Naive thymus-derived CD4-positive, alpha-beta T cell (primary cell): ENCODE measurements at regions of chr18 and their contacts with region 1.

Region 1: DNA sequence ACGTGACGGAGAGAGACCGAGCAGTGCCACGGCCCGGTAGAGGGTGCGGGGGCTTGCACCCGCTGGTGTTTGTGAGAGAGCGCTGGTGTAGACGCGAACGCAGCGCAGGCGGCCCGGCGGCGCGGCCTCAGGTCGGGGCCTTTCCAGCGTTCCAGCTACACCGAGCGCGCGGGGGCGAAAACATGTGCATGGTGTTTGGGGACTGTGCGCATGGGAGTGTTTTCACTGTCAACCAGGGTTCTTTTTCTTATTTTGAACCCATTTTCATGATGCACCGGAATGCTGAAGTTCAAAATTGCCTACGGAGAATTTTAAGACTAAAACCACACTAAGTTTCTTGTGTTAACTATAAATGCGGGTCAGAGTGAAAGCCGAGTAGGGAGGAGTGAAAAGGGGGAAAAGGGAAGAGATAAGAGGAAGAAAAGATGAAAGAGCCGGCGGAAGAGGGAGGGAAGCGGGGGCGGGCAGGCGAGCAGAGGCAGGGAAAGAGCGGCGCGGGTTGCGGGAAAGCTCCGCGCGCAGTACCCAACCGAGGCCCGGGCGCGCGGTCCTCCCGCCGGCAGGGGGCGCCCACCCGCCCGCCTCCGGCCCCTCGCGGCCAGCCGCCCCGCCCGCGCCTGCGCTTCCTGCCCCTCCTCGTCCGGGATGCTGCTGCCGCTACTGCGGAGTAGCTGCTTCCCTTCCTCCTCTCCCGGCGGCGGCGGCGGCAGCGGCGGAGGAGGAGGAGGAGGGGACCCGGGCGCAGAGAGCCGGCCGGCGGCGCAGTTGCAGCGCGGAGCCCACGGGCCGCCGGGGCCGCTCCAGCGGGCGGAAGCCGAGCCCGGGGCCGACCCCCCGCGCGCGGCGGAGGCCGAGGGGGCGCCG is at the start of gene RAB12:
- DNase-seq: peak; percentile 76 to 93 (median 87)
- ATAC-seq: peak; percentile 97
- H3K4me3 ChIP-seq: peak within 1 kb of the TSS; percentile 78
- H3K4me3 Mint-ChIP-seq: peak within 1 kb of the TSS; percentile 88 to 97 (median 94)
- H3K27ac ChIP-seq: peak within 1 kb of the TSS; percentile 76
- H3K27ac Mint-ChIP-seq: peak within 1 kb of the TSS; percentile 91 to 99 (median 96)
- H3K4me1 ChIP-seq: peaks cover 18 to 29% of the 10 kb centered on the region in 2 donors
- H3K4me1 Mint-ChIP-seq: peaks cover 42 to 63% (median 56%) of the 10 kb centered on the region in 7 donors
- H3K27me3 ChIP-seq: no peaks in the 10 kb centered on the region
- H3K27me3 Mint-ChIP-seq: peaks cover 0 to 16% (median 7%) of the 10 kb centered on the region in 5 donors
- total RNA-seq, gene RAB12: 19.8 to 26.2 (median 23.0) TPM

Region 2: GRCh38 chr18:8623549-8624106 is 14.6 kb after region 1 on chr18:
- CTCF ChIA-PET with region 1: no interaction called
- POLR2A ChIA-PET with region 1: no interaction called
- intact Hi-C with region 1: loop called in 1 of 2 experiments (anchors 1 kb)
- DNase-seq: no peak
- ATAC-seq: peak; percentile 90
- H3K4me3 ChIP-seq: no peak overlapping the region
- H3K4me3 Mint-ChIP-seq: peak overlapping the region in 5 of 10 donors; percentile 21 to 75 (median 28)
- H3K27ac ChIP-seq: no peak overlapping the region
- H3K27ac Mint-ChIP-seq: peak overlapping the region in 5 of 9 donors; percentile 27 to 81 (median 38)
- H3K4me1 ChIP-seq: peaks cover 2 to 5% of the 10 kb centered on the region in 2 donors
- H3K4me1 Mint-ChIP-seq: peaks cover 35 to 72% (median 57%) of the 10 kb centered on the region in 7 donors
- H3K27me3 ChIP-seq: no peaks in the 10 kb centered on the region
- H3K27me3 Mint-ChIP-seq: no peaks in the 10 kb centered on the region

Region 3: DNA sequence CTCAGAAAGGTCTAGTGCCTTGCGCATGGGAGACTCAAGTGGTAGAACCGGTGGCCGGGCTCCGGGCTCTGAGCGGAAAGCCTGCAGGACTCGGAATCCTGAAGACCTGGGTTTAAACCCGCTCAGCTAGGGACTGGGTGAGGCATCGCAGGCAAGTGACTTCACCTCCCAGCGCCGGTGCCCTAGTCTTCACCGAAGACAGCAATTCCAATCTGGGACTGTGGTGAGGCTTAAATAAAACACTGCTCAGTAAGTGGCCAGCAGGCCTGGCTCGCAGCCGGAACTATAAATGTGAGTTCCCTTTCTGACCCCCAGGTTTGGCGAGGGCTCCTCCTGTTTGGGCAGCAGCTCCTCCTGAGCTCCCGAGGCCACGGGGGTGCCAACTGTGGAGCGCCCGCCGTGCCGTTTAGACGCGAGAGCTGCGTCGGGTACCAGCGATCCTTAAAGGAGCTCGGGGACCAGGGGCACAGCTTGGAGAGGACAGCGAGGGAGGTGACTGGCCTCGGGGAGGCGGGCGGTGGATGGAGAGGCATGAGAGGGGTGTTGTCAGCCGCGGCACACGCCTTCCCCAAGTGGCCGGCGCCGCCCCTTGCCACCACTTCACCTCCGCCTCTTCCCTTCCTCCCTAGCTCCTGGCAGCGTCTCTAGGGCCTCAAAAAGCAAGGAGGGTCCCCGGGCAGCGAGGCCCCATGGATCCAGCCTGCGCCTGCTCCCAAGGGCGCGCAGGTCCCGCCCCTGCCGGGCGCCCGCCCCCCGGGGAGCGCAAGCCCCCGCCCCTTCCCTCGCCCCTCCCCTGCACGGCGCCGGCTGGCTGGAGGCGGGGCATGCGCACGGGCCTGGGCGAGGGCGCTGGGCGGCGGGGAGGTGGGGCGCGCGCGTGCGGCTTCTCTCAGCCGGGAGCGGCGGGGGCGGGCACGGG is 95.6 kb after region 1 on chr18:
- CTCF ChIA-PET with region 1: no interaction called
- POLR2A ChIA-PET with region 1: interaction called, 4 read pairs
- intact Hi-C with region 1: loop called in 1 of 2 experiments (anchors 2 kb)
- DNase-seq: peak; percentile 65 to 92 (median 75)
- ATAC-seq: peak; percentile 96
- H3K4me3 ChIP-seq: peak overlapping the region; percentile 75
- H3K4me3 Mint-ChIP-seq: peak overlapping the region; percentile 83 to 96 (median 90)
- H3K27ac ChIP-seq: peak overlapping the region; percentile 25
- H3K27ac Mint-ChIP-seq: peak overlapping the region in 4 of 9 donors; percentile 4 to 67 (median 48)
- H3K4me1 ChIP-seq: peaks cover 6 to 21% of the 10 kb centered on the region in 2 donors
- H3K4me1 Mint-ChIP-seq: peaks cover 13 to 29% (median 17%) of the 10 kb centered on the region in 7 donors
- H3K27me3 ChIP-seq: peaks cover 5 to 19% of the 10 kb centered on the region in 2 donors
- H3K27me3 Mint-ChIP-seq: peaks cover 60 to 78% (median 68%) of the 10 kb centered on the region in 5 donors

Region 4: DNA sequence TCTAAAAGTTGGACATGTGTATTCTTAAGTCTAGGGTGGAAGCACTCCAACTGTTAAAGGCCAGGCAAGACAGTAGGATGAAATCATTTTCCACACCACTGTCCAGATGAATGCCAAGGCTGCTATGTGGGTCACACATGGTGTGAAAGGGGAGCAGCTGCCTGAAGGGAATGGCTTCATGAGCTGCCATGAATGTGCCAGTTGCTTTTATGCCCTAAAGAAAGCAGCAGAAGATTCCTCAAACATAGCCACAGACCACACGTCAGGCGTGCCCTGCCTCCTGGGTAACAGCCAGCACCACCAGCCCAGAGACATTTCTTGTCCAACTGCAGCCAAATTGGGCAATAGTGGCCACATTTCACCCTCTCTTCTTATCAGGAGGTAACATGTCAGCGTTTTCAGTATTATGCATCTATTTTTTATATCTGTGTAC is 226.5 kb after region 1 on chr18:
- CTCF ChIA-PET with region 1: no interaction called
- POLR2A ChIA-PET with region 1: no interaction called
- intact Hi-C with region 1: no loop called
- DNase-seq: no peak
- ATAC-seq: no peak
- H3K4me3 ChIP-seq: no peak overlapping the region
- H3K4me3 Mint-ChIP-seq: no peak overlapping the region
- H3K27ac ChIP-seq: no peak overlapping the region
- H3K27ac Mint-ChIP-seq: no peak overlapping the region
- H3K4me1 ChIP-seq: no peaks in the 10 kb centered on the region
- H3K4me1 Mint-ChIP-seq: no peaks in the 10 kb centered on the region
- H3K27me3 ChIP-seq: no peaks in the 10 kb centered on the region
- H3K27me3 Mint-ChIP-seq: peaks cover 0 to 6% (median 0%) of the 10 kb centered on the region in 5 donors

Region 5: DNA sequence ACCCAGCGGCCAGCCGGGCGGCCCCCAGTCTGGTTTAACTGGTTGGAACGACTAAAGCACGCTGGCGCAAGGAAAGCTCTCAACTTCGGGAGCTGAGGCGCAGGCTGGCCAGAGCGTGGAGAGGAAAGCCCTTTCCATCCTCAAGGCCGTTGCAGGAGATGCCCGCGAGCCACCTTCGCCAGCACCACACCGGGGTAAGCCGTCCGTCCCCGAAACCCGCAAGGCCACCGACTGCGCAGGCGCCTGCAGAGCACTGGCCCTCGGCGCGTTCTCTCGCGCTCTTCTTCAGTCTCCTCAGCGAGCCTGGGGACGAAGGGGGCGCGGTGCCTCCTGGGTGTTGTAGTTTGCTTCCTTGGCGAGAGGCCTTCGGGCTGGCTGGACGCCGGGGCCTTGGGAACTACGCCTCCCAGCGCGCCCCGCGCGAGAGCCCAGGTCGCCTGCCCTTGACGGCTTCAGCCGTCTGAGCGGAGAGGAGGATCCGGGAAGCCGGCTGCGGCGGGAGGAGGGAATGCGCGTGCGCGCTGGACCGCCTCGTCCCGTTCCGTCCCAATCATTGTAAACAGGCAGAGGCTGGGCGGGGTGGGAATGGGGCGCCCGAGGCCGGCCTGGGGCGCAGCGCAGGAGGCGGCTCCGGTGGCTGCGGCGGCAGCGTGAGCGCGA is 866.1 kb after region 1 on chr18 and contains the start of gene RALBP1:
- CTCF ChIA-PET with region 1: no interaction called
- POLR2A ChIA-PET with region 1: interaction called, 3 read pairs
- intact Hi-C with region 1: loop called (anchors 1 kb)
- DNase-seq: peak; percentile 92 to 98 (median 96)
- ATAC-seq: peak; percentile 99
- H3K4me3 ChIP-seq: peak within 1 kb of the TSS; percentile 88
- H3K4me3 Mint-ChIP-seq: peak within 1 kb of the TSS; percentile 84 to 99 (median 97)
- H3K27ac ChIP-seq: peak within 1 kb of the TSS; percentile 81
- H3K27ac Mint-ChIP-seq: peak within 1 kb of the TSS; percentile 82 to 97 (median 94)
- H3K4me1 ChIP-seq: peaks cover 0 to 14% of the 10 kb centered on the region in 2 donors
- H3K4me1 Mint-ChIP-seq: peaks cover 21 to 41% (median 30%) of the 10 kb centered on the region in 7 donors
- H3K27me3 ChIP-seq: no peaks in the 10 kb centered on the region
- H3K27me3 Mint-ChIP-seq: peaks cover 0 to 24% (median 5%) of the 10 kb centered on the region in 5 donors
- total RNA-seq, gene RALBP1: 20.3 to 47.8 (median 42.2) TPM